SK-N-SH (cell line): ENCODE measurements at regions of chr14 and their contacts with region 1.

Region 1: GRCh38 chr14:32366256-32366879 is 37.3 kb downstream of the AKAP6 start:
- DNase-seq: peak; percentile 34
- H3K4me3 ChIP-seq: no peak overlapping the region
- H3K27ac ChIP-seq: peak overlapping the region; percentile 83 to 93
- H3K4me1 ChIP-seq: peaks cover 27 to 61% of the 10 kb centered on the region in 2 experiments
- H3K27me3 ChIP-seq: no peaks in the 10 kb centered on the region
- CTCF ChIP-seq: peak; percentile 65
- EP300 ChIP-seq: 0 out of 4 replicates have a peak, but pooled peaks of 1 of the 2 experiments have one; percentile 8
- RAD21 ChIP-seq: peak; percentile 69

Region 2: DNA sequence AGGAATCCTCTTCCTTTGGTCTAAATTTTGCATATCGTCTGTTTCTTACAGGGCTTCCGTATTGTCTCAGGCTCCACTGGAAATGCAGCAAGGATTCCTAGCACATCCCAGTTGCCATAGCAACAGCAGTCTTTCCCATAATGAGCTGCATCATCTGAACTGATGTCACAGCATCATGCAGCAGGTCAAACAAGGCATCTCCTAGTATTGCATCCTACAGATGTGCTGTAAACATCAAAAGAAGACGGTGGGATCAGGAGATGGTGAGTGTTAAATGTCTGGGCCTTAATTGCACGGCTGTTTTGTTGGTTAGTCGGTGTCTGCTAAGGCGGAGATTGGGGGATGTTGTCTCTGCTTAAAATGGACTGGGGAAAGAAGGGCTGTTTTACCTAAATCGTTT is 37.2 kb before region 1 on chr14 and contains the start of gene AKAP6:
- CTCF ChIA-PET with region 1: interaction called, 16 read pairs
- POLR2A ChIA-PET with region 1: no interaction called
- DNase-seq: peak; percentile 56
- H3K4me3 ChIP-seq: peak within 1 kb of the TSS; percentile 48 to 49
- H3K27ac ChIP-seq: peak within 1 kb of the TSS; percentile 33 to 86; a peak in 3 of 4 replicates
- H3K4me1 ChIP-seq: peaks cover 0 to 12% of the 10 kb centered on the region in 2 experiments; a peak in 2 of 4 replicates
- H3K27me3 ChIP-seq: no peaks in the 10 kb centered on the region
- CTCF ChIP-seq: no peak
- EP300 ChIP-seq: peak in 1 of 2 experiments; percentile 35; a peak in 1 of 4 replicates
- RAD21 ChIP-seq: no peak
- polyA plus RNA-seq, gene AKAP6: 1.7 and 4.1 TPM in 2 replicates

Region 3: GRCh38 chr14:32382704-32383103 is 16.3 kb after region 1 on chr14:
- CTCF ChIA-PET with region 1: interaction called, 21 read pairs
- POLR2A ChIA-PET with region 1: no interaction called
- DNase-seq: peak; percentile 34
- H3K4me3 ChIP-seq: no peak overlapping the region
- H3K27ac ChIP-seq: no peak overlapping the region
- H3K4me1 ChIP-seq: peaks cover 0 to 1% of the 10 kb centered on the region in 2 experiments; a peak in 1 of 4 replicates
- H3K27me3 ChIP-seq: no peaks in the 10 kb centered on the region
- CTCF ChIP-seq: peak; percentile 72
- EP300 ChIP-seq: no peak
- RAD21 ChIP-seq: peak; percentile 88